ENCODE measurements at regions of chr11 and their contacts with region 1.

Region 1: GRCh38 chr11:28439403-28439802 is 331.2 kb downstream of the METTL15 start:
- DNase-seq: no peak
- H3K4me3 ChIP-seq: no peak overlapping the region
- H3K27ac ChIP-seq: no peak overlapping the region
- H3K4me1 ChIP-seq: no peaks in the 10 kb centered on the region
- H3K27me3 ChIP-seq: no peaks in the 10 kb centered on the region
- CTCF ChIP-seq: no peak

Region 2: GRCh38 chr11:28274216-28274615 is 165.2 kb before region 1 on chr11:
- CTCF ChIA-PET with region 1: no interaction called
- POLR2A ChIA-PET with region 1: interaction called, 14 read pairs
- intact Hi-C with region 1: no loop called
- DNase-seq: no peak
- H3K4me3 ChIP-seq: no peak overlapping the region
- H3K27ac ChIP-seq: no peak overlapping the region
- H3K4me1 ChIP-seq: no peaks in the 10 kb centered on the region
- H3K27me3 ChIP-seq: no peaks in the 10 kb centered on the region
- CTCF ChIP-seq: no peak

Region 3: DNA sequence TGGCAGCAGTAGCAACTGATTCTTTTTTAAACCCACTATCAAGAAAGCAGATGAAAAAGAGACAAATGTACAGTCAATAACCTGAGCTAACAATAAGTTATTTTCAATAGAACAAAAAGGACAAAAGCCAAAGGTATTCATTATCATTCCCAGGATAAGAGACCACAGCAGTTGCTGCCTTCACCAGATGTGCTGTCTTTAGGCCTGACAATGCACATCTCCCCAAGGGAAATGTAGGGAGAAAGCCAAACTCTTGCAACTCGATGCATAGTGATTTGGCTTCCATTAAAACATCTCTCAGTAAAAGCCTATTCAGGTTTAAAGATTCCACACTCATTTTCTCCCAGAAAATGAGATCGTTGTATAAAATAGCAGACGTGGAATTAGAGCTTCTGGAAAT is 120.5 kb before region 1 on chr11:
- CTCF ChIA-PET with region 1: no interaction called
- POLR2A ChIA-PET with region 1: no interaction called
- intact Hi-C with region 1: no loop called
- DNase-seq: no peak
- H3K4me3 ChIP-seq: no peak overlapping the region
- H3K27ac ChIP-seq: no peak overlapping the region
- H3K4me1 ChIP-seq: no peaks in the 10 kb centered on the region
- H3K27me3 ChIP-seq: no peaks in the 10 kb centered on the region
- CTCF ChIP-seq: no peak